GM12878 (cell line): ENCODE measurements at regions of chr6 and their contacts with region 1.

Region 1: GRCh38 chr6:137799950-137800568 is 67.0 kb upstream of the TNFAIP3 start:
- DNase-seq: no peak
- ATAC-seq: peak; percentile 96
- H3K4me3 ChIP-seq: no peak overlapping the region
- H3K27ac ChIP-seq: no peak overlapping the region
- H3K4me1 ChIP-seq: peaks cover 19% of the 10 kb centered on the region
- H3K27me3 ChIP-seq: no peaks in the 10 kb centered on the region
- CTCF ChIP-seq: peak; percentile 67 to 78 (median 70)
- EP300 ChIP-seq: no peak
- POLR2A ChIP-seq: no peak
- RAD21 ChIP-seq: peak; percentile 88

Region 2: GRCh38 chr6:136031982-136032381 is 1768.1 kb before region 1 on chr6:
- CTCF ChIA-PET with region 1: no interaction called
- POLR2A ChIA-PET with region 1: no interaction called
- RAD21 ChIA-PET with region 1: no interaction called
- SMC1A ChIA-PET with region 1: no interaction called
- in situ Hi-C with region 1: no loop called
- intact Hi-C with region 1: no loop called
- DNase-seq: no peak
- ATAC-seq: peak; percentile 45; the same call in 1 of the 3 replicates
- H3K4me3 ChIP-seq: no peak overlapping the region
- H3K27ac ChIP-seq: no peak overlapping the region
- H3K4me1 ChIP-seq: no peaks in the 10 kb centered on the region
- H3K27me3 ChIP-seq: no peaks in the 10 kb centered on the region
- CTCF ChIP-seq: peak; percentile 24 to 38 (median 27); a peak in 4 of 6 replicates
- EP300 ChIP-seq: no peak
- POLR2A ChIP-seq: no peak
- RAD21 ChIP-seq: 0 out of 2 replicates have a peak, but pooled peaks have one; percentile 11

Region 3: DNA sequence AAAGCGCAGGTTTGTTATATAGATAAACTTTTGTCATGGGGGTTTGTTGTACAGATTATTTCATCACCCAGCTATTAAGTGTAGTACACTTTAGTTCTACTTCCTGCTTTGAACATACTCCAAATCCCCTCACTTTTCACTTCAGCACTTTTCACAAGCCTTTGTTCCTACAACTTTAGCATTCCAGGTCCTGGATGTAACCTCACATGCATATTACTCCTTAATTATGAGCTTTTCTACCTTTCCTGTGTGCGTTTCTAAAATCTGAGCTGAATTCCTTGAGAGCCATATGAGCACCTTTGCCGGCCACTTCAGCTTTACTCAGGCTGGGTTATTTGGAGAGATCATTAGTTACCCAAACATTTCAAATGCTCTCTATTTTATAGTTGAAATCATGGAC is 112.2 kb before region 1 on chr6:
- CTCF ChIA-PET with region 1: no interaction called
- POLR2A ChIA-PET with region 1: no interaction called
- RAD21 ChIA-PET with region 1: no interaction called
- SMC1A ChIA-PET with region 1: no interaction called
- in situ Hi-C with region 1: no loop called
- intact Hi-C with region 1: no loop called
- DNase-seq: no peak
- ATAC-seq: no peak
- H3K4me3 ChIP-seq: no peak overlapping the region
- H3K27ac ChIP-seq: no peak overlapping the region
- H3K4me1 ChIP-seq: no peaks in the 10 kb centered on the region
- H3K27me3 ChIP-seq: no peaks in the 10 kb centered on the region
- CTCF ChIP-seq: no peak
- EP300 ChIP-seq: no peak
- POLR2A ChIP-seq: no peak
- RAD21 ChIP-seq: no peak

Region 4: DNA sequence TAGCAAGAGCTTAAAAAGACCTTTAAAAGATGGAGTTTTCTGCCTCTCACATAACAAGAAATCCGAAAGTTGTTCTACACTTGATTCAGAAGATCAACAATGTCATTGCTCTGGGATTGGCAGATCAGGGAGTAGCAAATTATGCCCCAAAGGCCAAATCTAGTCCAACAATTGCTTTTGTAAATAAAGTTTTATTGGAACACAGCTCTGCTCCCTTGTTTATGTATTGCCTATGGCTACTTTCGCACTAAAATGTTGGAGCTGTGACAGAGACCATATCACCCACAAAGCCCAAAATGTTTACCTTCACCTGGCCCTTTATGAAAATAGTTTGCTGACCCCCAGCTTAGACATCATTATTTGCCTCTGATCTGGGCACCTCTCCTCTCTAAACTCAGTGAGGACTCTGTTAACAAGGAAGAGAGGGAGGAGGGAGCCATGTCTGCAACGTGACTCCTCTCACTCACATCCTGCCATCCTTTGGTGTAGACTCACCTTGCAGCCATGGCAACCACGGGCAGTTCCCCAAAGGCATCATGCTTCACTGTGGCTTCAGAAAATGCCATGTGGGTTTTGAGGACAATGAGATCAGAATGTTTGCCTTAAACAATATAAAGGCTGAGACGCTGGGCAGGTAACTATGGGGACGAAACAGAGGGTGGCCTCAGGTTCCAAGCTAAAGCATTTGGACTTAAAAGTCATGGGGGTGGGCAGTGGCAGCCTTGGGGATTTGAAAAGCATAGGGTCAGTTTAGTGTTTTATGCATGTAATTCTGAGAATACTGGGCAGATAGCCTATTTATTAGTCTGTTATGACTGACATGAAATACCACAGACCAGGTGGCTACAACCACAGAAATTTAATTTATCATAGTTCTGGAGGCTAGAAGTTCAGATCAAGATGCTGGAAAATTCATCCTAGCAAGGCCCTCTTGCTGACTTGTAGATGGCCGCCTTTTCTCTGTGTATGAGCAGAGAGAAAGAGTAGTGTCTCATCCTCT is 82.7 kb before region 1 on chr6:
- CTCF ChIA-PET with region 1: interaction called, 6 read pairs
- POLR2A ChIA-PET with region 1: interaction called, 3 read pairs
- RAD21 ChIA-PET with region 1: interaction called, 5 read pairs
- SMC1A ChIA-PET with region 1: interaction called, 13 read pairs
- in situ Hi-C with region 1: no loop called
- intact Hi-C with region 1: no loop called
- DNase-seq: no peak
- ATAC-seq: peak; percentile 95
- H3K4me3 ChIP-seq: no peak overlapping the region
- H3K27ac ChIP-seq: no peak overlapping the region
- H3K4me1 ChIP-seq: peaks cover 8% of the 10 kb centered on the region
- H3K27me3 ChIP-seq: no peaks in the 10 kb centered on the region
- CTCF ChIP-seq: no peak
- EP300 ChIP-seq: no peak
- POLR2A ChIP-seq: no peak
- RAD21 ChIP-seq: no peak

Region 5: GRCh38 chr6:137767911-137768690 is 32.0 kb before region 1 on chr6:
- CTCF ChIA-PET with region 1: interaction called, 13 read pairs
- POLR2A ChIA-PET with region 1: no interaction called
- RAD21 ChIA-PET with region 1: interaction called, 6 read pairs
- SMC1A ChIA-PET with region 1: interaction called, 11 read pairs
- in situ Hi-C with region 1: no loop called
- intact Hi-C with region 1: no loop called
- DNase-seq: peak; percentile 79
- ATAC-seq: peak; percentile 85
- H3K4me3 ChIP-seq: peak overlapping the region; percentile 13
- H3K27ac ChIP-seq: peak overlapping the region; percentile 92
- H3K4me1 ChIP-seq: peaks cover 26% of the 10 kb centered on the region
- H3K27me3 ChIP-seq: no peaks in the 10 kb centered on the region
- CTCF ChIP-seq: no peak
- EP300 ChIP-seq: peak; percentile 54 to 63; a peak in 3 of 4 replicates
- POLR2A ChIP-seq: no peak
- RAD21 ChIP-seq: no peak

Region 6: GRCh38 chr6:137823826-137824555 is 23.9 kb after region 1 on chr6:
- CTCF ChIA-PET with region 1: interaction called, 19 read pairs
- POLR2A ChIA-PET with region 1: interaction called, 3 read pairs
- RAD21 ChIA-PET with region 1: interaction called, 17 read pairs
- SMC1A ChIA-PET with region 1: interaction called, 86 read pairs
- in situ Hi-C with region 1: no loop called
- intact Hi-C with region 1: no loop called
- DNase-seq: no peak
- ATAC-seq: peak; percentile 21
- H3K4me3 ChIP-seq: no peak overlapping the region
- H3K27ac ChIP-seq: no peak overlapping the region; the same call in 1 of the 2 replicates
- H3K4me1 ChIP-seq: peaks cover 32% of the 10 kb centered on the region
- H3K27me3 ChIP-seq: no peaks in the 10 kb centered on the region
- CTCF ChIP-seq: no peak
- EP300 ChIP-seq: no peak
- POLR2A ChIP-seq: no peak
- RAD21 ChIP-seq: no peak

Region 7: GRCh38 chr6:137975188-137975940 is 175.3 kb after region 1 on chr6:
- CTCF ChIA-PET with region 1: interaction called, 6 read pairs
- POLR2A ChIA-PET with region 1: no interaction called
- RAD21 ChIA-PET with region 1: interaction called, 4 read pairs
- SMC1A ChIA-PET with region 1: interaction called, 11 read pairs
- in situ Hi-C with region 1: no loop called
- intact Hi-C with region 1: no loop called
- DNase-seq: peak; percentile 53
- ATAC-seq: peak; percentile 67
- H3K4me3 ChIP-seq: peak overlapping the region; percentile 1; the same call in 1 of the 2 replicates
- H3K27ac ChIP-seq: peak overlapping the region; percentile 34
- H3K4me1 ChIP-seq: peaks cover 36% of the 10 kb centered on the region
- H3K27me3 ChIP-seq: no peaks in the 10 kb centered on the region
- CTCF ChIP-seq: peak; percentile 23 to 62 (median 44); a peak in 5 of 6 replicates
- EP300 ChIP-seq: no peak
- POLR2A ChIP-seq: no peak
- RAD21 ChIP-seq: peak; percentile 81